Mammary epithelial cell (primary cell): ENCODE measurements at regions of chr17 and their contacts with region 1.

Region 1: DNA sequence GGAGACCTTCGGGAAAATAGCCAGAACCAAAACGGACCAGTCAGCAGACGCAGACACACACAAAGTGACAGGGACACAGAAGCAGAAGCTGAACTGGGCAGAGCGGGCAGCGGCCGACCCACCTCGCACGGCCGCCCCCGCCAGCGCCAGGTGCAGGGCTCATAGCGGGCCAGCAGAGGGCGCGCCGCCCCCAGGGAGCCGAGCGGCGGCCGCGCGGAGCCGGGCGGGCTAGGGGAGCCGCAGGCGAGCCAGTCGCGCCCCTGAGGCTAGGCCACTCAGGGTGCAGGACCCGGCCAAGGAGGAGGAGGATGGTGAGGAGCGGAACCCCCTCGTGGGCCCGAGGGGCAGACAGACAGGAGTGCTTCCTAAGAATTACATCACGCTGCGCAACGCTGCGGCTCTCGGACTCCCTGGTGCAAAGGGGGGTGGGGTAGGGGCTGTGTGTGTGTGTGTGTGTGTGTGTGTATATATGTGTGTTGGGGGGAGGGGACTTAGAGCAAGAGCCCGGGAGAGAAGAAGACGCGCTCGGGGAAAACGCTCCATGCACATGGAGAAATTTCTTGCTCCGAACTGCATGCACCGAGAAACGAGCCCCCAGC is 913 bp upstream of the NOG start:
- DNase-seq: peak; percentile 61
- H3K4me3 ChIP-seq: peak overlapping the region; percentile 69 to 89 (median 74)
- H3K27ac ChIP-seq: no peak overlapping the region
- H3K4me1 ChIP-seq: peaks cover 14% of the 10 kb centered on the region
- H3K27me3 ChIP-seq: no peaks in the 10 kb centered on the region
- CTCF ChIP-seq: peak; percentile 66 to 70

Region 2: DNA sequence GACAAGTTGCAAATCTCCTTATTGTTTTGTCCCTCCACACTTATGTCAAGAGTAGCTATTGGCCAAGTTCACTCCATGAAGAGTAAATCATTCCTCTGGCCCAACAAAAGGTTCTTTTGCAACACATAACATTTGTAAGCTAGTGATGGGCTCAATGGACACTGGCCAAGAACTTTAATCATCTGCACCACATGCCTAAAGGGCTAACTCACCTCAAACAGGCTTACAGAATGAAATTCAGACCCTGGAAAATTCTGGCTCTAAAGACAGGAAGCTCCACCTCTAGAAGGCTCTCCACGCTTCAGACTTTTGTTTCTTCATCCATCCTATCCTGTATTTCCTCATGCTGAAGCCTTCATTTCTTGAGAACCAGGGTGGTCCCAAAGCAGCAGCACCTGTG is 450.3 kb before region 1 on chr17:
- CTCF ChIA-PET with region 1: no interaction called
- dilution Hi-C with region 1: no loop called
- in situ Hi-C with region 1: no loop called
- intact Hi-C with region 1: no loop called
- DNase-seq: peak; percentile 18
- H3K4me3 ChIP-seq: no peak overlapping the region
- H3K27ac ChIP-seq: no peak overlapping the region
- H3K4me1 ChIP-seq: no peaks in the 10 kb centered on the region
- H3K27me3 ChIP-seq: no peaks in the 10 kb centered on the region
- CTCF ChIP-seq: no peak

Region 3: GRCh38 chr17:56577843-56578204 is 14.8 kb before region 1 on chr17:
- CTCF ChIA-PET with region 1: interaction called, 11 read pairs
- dilution Hi-C with region 1: no loop called
- in situ Hi-C with region 1: no loop called
- intact Hi-C with region 1: no loop called
- DNase-seq: no peak
- H3K4me3 ChIP-seq: no peak overlapping the region
- H3K27ac ChIP-seq: no peak overlapping the region
- H3K4me1 ChIP-seq: no peaks in the 10 kb centered on the region
- H3K27me3 ChIP-seq: peaks cover 10% of the 10 kb centered on the region
- CTCF ChIP-seq: no peak

Region 4: DNA sequence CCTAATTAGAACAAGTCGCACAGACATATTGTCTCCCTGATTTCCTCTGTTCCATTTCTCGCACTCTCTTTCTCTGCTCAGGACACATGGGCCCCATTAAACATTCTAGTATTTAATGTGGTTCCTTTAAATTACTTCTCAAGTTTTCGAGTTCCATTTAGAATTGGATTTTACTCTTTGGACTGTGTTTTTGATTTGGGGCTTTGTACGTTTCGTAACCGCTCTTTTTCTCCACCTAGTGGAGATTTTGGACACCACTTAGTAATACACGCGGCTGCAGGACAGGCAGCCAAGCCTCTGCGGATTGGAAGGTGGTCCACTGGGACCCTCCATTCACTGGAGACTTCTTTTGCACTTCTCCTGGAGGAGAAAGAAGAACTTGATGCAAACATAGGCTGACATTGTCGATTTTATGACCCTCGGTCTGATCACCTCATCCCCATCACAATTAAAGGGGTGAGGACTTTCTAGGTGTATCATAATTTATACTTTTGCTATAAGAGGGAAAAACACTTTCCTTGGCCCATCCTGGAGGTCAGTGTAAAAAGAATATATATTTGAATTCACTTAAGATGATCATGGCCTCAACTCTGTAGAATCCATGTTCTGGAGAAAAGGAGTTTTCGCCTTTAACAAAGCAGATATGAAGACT is 86.7 kb after region 1 on chr17:
- CTCF ChIA-PET with region 1: interaction called, 8 read pairs
- dilution Hi-C with region 1: no loop called
- in situ Hi-C with region 1: no loop called
- intact Hi-C with region 1: loop called (anchors 1 kb)
- DNase-seq: peak; percentile 34
- H3K4me3 ChIP-seq: no peak overlapping the region
- H3K27ac ChIP-seq: peak overlapping the region; percentile 89
- H3K4me1 ChIP-seq: peaks cover 74% of the 10 kb centered on the region
- H3K27me3 ChIP-seq: no peaks in the 10 kb centered on the region
- CTCF ChIP-seq: peak; percentile 54 to 64

Region 5: DNA sequence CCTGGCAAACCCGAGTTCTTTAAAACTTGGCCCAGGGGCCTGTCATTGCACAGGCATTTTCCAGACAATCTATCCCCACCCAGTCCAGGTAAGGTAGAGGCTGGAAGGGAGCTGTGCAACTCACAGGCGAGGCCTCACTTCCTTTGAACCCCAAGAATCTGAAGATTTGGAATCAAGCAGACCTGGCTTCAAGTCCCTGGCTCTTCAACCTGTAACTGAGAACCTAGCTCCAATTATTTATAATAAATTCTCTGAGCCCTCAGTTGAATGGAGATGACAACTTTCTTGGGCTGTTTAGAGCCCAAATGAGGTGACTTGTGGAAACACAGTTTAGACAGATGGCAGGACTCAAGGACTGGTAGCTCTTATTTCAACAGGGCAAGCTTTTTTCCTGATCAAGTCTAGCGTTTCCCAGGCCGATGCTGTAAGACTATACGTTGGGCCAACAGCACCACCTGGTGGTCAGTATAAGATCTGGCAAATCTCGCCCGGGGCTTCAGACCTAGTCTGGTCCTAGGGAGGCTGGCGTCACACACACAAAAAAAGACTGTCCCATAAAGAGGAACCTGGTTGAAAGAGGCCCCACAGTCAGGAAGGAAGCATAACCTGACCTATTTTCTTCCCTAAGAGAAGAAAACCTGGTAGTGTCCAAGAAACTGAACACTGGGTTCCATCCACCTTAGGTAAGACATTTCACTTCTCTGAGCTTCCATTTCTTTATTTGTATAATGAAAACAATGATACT is 123.2 kb after region 1 on chr17:
- CTCF ChIA-PET with region 1: interaction called, 31 read pairs
- dilution Hi-C with region 1: no loop called
- in situ Hi-C with region 1: loop called in 1 of 2 experiments (anchors 10 kb)
- intact Hi-C with region 1: loop called (anchors 1 kb)
- DNase-seq: peak; percentile 71
- H3K4me3 ChIP-seq: no peak overlapping the region
- H3K27ac ChIP-seq: no peak overlapping the region
- H3K4me1 ChIP-seq: peaks cover 15% of the 10 kb centered on the region
- H3K27me3 ChIP-seq: no peaks in the 10 kb centered on the region
- CTCF ChIP-seq: peak; percentile 60 to 77

Region 6: DNA sequence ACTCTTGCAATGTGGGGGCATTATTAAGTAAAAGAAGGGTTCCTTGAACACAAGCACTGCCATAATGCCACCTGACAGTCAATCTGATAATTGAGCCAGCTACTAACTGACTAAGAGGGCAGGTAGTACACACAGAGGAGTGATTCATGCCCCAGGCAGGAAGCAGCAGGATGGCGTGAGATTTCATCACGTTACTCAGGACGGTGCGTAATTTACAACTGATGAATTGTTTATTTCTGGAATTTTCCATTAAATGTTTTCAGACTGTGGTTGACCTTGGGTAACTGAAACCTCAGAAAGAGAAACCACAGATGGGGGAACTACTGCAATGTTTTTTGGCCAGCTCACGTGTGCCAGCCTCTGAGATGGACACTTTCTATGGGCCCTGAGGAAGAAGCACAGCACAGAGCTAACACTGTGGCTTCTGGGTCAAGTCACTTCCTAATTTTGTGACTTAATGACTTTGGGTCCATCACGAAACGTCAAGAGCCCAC is 194.4 kb after region 1 on chr17:
- CTCF ChIA-PET with region 1: interaction called, 16 read pairs
- dilution Hi-C with region 1: no loop called
- in situ Hi-C with region 1: no loop called
- intact Hi-C with region 1: no loop called
- DNase-seq: peak; percentile 99
- H3K4me3 ChIP-seq: no peak overlapping the region
- H3K27ac ChIP-seq: peak overlapping the region; percentile 79
- H3K4me1 ChIP-seq: peaks cover 36% of the 10 kb centered on the region
- H3K27me3 ChIP-seq: no peaks in the 10 kb centered on the region
- CTCF ChIP-seq: no peak

Region 7: GRCh38 chr17:56833809-56834379 is 241.3 kb after region 1 on chr17 and contains the starts of genes C17orf67 and DGKE:
- CTCF ChIA-PET with region 1: no interaction called
- dilution Hi-C with region 1: no loop called
- in situ Hi-C with region 1: no loop called
- intact Hi-C with region 1: loop called (anchors 5 kb)
- DNase-seq: peak; percentile 94
- H3K4me3 ChIP-seq: peak within 1 kb of the TSS; percentile 71 to 90 (median 74)
- H3K27ac ChIP-seq: peak within 1 kb of the TSS; percentile 66
- H3K4me1 ChIP-seq: peaks cover 30% of the 10 kb centered on the region
- H3K27me3 ChIP-seq: no peaks in the 10 kb centered on the region
- CTCF ChIP-seq: no peak
- total RNA-seq, gene C17orf67: 0.17 to 2.6 TPM
- total RNA-seq, gene DGKE: 6.7 to 13.4 TPM